A673 (cell line): ENCODE measurements at regions of chr19 and their contacts with region 1.

Region 1: DNA sequence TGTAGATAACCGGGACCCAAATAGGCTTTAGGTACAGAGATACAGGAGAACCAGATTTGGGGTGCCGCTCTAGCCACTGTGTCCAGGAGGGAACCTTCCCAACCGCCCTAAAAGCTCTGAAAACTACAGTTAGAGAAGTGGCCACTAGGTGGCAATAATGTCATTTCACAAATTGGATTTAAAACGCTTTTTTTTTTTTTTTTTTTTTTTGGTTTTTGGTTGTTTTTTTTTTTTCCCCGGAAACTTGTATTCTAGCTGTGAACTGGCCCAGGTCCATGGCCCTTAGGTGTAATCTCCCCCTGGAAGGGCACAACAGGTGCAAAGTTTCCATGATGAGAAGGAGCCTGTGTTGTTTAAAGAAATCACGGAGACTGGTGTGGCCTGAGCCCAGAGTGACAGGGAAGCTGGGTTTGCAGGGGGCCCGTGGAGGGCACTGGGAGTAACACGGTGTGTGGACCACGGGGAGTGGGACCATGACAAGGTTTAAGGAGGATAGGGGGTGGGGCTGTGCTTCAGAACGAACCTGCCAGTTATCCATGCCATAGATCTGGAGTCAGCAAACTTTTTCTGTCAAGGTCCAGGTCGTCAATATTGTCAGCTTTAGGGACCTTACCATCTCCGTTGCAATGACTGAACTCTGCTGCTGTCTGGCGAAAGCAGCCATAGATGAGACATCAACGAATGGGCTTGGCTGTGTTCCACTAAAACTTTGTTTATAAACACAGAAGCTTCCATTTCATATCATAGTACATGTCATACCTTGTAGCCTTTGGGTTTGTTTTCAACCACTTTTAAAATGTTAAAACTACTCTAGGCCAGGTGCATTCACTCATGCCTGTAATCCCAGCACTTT is 10.1 kb downstream of the OR1I1 start:
- DNase-seq: peak; percentile 81
- H3K4me3 ChIP-seq: no peak overlapping the region
- H3K27ac ChIP-seq: no peak overlapping the region
- H3K4me1 ChIP-seq: no peaks in the 10 kb centered on the region
- H3K27me3 ChIP-seq: peaks cover 10% of the 10 kb centered on the region
- CTCF ChIP-seq: peak; percentile 78

Region 2: GRCh38 chr19:14972676-14973075 is 119.5 kb before region 1 on chr19:
- CTCF ChIA-PET with region 1: no interaction called
- POLR2A ChIA-PET with region 1: no interaction called
- intact Hi-C with region 1: no loop called
- DNase-seq: no peak
- H3K4me3 ChIP-seq: no peak overlapping the region
- H3K27ac ChIP-seq: no peak overlapping the region
- H3K4me1 ChIP-seq: no peaks in the 10 kb centered on the region
- H3K27me3 ChIP-seq: peaks cover 21% of the 10 kb centered on the region
- CTCF ChIP-seq: no peak

Region 3: DNA sequence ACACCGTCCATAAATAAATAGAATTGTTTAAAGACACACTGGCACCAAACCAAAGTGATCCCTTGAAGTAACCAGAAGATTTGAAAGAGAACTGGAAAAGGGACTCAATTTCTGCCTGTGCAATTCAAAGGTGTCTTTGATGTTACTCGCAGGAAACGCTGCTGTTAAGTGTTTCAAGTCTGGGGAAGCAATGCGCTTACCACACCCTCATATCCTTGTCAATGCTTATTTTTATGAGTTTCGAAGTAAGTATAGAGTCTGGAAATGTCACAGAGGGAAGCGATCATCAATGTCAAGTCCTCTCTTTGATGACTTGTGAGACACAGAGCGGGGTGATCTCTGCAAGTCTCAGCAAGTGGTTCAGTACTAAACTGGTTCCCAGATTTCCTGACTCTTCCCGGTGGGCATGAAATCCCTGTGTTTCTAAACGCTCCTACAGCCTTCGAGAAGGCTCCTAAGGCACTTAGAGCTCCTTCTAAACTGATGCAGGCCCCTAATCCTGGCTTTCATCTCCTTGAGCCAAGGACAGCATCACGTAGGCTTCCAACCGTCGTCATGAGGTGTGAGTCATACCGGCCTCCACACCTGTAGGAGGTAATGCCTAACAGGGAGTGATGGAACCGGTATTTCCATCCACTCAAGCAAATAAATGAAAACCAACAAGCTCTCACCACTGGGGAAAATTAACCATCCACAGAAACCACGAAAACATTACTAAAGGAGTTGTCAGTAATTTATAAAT is 37.9 kb after region 1 on chr19:
- CTCF ChIA-PET with region 1: no interaction called
- POLR2A ChIA-PET with region 1: no interaction called
- intact Hi-C with region 1: no loop called
- DNase-seq: no peak
- H3K4me3 ChIP-seq: no peak overlapping the region
- H3K27ac ChIP-seq: no peak overlapping the region
- H3K4me1 ChIP-seq: peaks cover 5% of the 10 kb centered on the region
- H3K27me3 ChIP-seq: no peaks in the 10 kb centered on the region
- CTCF ChIP-seq: no peak

Region 4: DNA sequence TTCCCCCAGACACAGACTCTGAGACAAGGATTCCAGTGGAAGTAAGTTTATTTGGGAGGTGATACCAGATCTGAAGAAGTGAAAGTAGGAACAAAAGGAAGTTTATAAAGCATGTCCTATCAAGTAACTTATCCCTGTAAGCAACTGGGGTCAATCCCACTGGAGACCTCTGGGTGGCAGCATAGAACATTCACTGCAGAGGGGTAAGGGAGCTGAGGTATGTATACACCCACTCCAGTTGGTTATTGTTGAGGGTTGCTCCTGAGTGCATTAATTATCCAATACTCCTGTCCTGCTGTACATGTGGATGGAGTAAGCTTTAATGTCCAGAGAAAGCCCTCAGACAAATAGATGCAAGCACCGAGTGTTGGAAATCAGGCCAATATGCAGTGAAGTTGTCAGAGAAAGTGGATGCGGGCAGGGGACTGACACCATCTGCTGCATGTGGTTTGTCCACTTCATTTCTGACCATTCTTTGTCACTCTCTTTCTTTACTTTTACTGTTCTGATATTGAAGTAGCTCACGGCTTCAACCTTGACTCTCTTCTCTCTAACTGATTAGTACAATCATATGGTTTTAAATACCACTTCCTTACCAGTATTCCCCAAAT is 62.0 kb after region 1 on chr19:
- CTCF ChIA-PET with region 1: interaction called, 8 read pairs
- POLR2A ChIA-PET with region 1: no interaction called
- intact Hi-C with region 1: loop called (anchors 5 kb)
- DNase-seq: peak; percentile 73
- H3K4me3 ChIP-seq: no peak overlapping the region
- H3K27ac ChIP-seq: no peak overlapping the region
- H3K4me1 ChIP-seq: no peaks in the 10 kb centered on the region
- H3K27me3 ChIP-seq: no peaks in the 10 kb centered on the region
- CTCF ChIP-seq: peak; percentile 79

Region 5: DNA sequence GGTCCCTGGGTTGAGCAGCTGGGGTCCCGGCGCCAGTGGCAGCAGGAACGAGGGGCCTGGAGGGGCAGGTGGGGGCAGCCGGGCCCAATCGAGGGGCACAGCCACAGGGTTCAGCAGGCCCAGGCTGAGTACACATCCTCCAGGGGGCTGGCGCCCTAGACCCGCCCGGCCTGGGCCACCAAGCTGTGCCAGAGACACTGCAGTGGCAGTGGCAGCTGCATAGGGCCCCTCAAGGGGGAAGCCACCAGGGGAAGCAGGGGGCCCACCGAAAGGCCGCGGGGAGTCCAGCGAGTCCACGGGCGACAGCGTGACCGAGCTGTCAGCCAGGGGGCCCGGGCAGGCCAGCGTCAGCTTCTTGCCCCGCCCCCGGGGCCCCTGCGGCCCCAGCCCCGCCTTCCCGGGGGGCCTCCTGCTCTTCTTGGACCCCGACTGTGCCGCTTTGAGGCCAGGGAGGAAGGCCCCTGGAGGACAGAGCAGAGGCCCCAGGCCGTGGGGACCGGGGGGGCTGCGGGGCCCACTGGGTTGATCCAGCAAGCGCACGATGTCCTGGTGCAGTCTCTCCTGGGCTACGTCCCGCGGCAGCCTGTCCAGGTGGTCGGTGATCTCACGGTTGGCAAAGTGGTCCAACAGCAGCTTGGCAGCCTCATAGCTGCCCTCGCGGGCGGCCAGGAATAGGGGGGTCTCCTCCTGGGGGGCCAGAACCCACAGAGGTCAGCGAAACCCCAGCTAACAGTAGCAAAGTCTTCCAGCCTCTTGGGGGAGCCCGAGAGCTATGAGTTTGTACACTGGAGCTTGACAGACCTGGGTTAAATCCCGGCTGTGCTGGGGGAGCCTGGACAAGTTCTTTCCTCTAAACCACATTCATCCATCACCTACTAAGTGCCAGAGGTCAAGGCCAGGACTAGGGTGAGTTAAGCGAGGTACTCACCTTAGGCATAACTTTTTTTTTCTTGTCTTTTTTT is 69.2 kb after region 1 on chr19:
- CTCF ChIA-PET with region 1: interaction called, 18 read pairs
- POLR2A ChIA-PET with region 1: no interaction called
- intact Hi-C with region 1: no loop called
- DNase-seq: peak; percentile 56
- H3K4me3 ChIP-seq: no peak overlapping the region
- H3K27ac ChIP-seq: no peak overlapping the region
- H3K4me1 ChIP-seq: no peaks in the 10 kb centered on the region
- H3K27me3 ChIP-seq: no peaks in the 10 kb centered on the region
- CTCF ChIP-seq: peak; percentile 58

Region 6: DNA sequence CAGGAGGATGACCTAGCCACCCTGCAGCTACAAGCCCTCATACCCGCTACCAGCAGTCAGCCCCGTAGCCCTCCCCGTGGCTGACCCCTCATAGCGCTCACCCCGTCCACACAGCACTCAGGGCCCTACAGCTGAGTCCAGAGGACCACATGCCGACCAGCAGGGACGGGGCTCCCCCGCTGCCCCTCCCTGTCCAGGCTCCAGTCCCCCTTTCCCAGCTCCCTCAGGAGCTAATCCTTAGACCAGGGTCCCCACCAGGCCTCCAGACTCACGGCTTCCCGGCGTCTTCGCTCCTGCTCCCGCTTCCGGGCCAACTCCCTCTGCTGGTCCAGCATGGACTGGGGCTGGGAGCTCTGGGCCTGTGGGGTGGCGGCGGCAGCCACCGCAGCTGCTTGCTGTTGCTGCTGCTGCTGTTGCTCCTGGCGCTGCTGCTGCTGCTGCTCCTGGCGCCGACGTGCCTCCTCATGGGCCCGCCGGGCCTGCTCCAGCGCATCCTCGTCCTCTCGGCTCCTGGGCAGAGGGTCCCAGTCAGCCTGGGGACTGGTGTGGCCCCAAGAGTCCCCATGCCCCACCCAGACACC is 146.4 kb after region 1 on chr19:
- CTCF ChIA-PET with region 1: no interaction called
- POLR2A ChIA-PET with region 1: no interaction called
- intact Hi-C with region 1: no loop called
- DNase-seq: no peak
- H3K4me3 ChIP-seq: no peak overlapping the region
- H3K27ac ChIP-seq: no peak overlapping the region
- H3K4me1 ChIP-seq: no peaks in the 10 kb centered on the region
- H3K27me3 ChIP-seq: no peaks in the 10 kb centered on the region
- CTCF ChIP-seq: no peak

Region 7: DNA sequence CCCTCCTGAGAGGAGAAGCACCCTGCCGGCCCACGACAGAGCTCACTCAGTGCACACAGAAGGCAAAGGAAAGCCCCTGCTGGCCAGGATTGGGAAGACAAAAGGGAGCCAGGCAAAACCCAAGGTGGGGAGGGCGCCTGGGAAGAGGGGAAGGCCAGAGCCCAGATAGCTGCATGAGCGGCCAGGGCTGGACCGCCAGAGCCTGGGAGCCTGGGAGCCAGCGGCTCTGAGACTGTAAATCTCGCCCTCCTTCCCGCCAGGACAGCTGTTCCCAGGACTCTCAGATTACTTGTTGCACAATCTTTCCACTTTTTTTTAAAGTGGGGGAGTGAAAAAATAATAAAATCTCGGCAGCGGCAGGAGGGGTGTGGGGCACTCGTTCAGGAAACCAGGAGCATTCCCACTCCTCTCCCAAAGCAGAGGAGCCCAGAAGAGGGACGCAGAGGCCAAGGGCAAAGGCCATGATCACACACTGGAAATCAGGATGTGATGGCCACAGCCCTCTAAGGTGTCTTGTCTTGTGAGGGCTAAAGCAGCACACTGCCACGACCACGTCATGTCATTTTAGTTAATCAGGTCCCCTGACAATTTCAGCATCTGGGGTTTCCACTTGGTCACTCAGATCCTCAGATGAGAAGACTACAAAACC is 159.7 kb after region 1 on chr19:
- CTCF ChIA-PET with region 1: interaction called, 4 read pairs
- POLR2A ChIA-PET with region 1: no interaction called
- intact Hi-C with region 1: loop called (anchors 10 kb)
- DNase-seq: peak; percentile 79
- H3K4me3 ChIP-seq: no peak overlapping the region
- H3K27ac ChIP-seq: peak overlapping the region; percentile 65
- H3K4me1 ChIP-seq: peaks cover 21% of the 10 kb centered on the region
- H3K27me3 ChIP-seq: no peaks in the 10 kb centered on the region
- CTCF ChIP-seq: peak; percentile 51

Region 8: DNA sequence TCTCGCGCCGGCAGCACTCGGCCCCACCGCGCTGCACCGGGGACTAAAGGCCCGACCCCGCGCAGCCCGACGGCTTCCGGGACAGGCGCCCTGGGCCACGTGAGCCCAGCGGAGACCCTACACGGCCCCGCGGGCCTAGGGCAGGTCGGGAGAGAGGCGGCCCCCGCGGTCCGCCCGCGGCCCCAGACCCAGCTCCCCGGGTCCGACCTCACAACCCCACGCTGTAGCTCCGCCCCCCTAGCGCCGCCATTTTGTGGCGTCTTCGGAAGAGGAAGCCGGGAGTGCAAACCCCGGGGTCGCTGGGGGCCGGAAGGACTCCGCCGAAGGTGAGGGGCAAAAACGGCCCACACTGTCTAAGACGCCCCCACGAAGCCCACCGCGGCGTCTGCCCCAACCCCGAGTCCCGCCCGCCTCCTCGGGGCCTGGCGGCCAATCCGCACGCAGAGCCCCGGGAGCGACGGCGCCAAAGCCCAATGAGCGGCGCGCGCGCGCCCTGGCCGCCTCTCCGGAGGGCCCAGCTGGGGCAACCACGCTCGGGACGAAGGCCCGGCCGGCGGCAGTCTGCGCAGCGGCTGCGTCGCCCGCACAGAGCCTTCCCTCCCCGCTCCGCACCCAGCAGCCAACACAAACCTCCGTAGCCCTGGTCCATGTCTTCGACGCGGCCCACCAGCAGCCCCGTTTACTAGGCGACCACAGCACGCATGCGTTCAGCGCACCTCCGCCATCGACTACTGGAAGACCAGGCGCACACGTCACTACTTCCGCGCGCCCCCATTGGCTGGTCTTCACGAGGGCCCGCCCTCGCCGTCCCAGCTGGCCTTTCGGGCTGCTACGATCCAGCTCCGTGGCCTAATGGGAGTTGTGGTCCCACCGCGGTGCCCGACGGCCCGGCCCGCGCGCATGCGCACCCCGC is 287.2 kb after region 1 on chr19 and contains the start of gene AKAP8:
- CTCF ChIA-PET with region 1: interaction called, 23 read pairs
- POLR2A ChIA-PET with region 1: no interaction called
- intact Hi-C with region 1: no loop called
- DNase-seq: peak; percentile 99
- H3K4me3 ChIP-seq: peak within 1 kb of the TSS; percentile 80
- H3K27ac ChIP-seq: peak within 1 kb of the TSS; percentile 99
- H3K4me1 ChIP-seq: peaks cover 11% of the 10 kb centered on the region
- H3K27me3 ChIP-seq: no peaks in the 10 kb centered on the region
- CTCF ChIP-seq: no peak
- total RNA-seq, gene AKAP8: 46.8 and 48.4 TPM in 2 replicates

Region 9: GRCh38 chr19:15418588-15419412 is 326.7 kb after region 1 on chr19 and contains the start of gene AKAP8L:
- CTCF ChIA-PET with region 1: interaction called, 14 read pairs
- POLR2A ChIA-PET with region 1: no interaction called
- intact Hi-C with region 1: no loop called
- DNase-seq: peak; percentile 100
- H3K4me3 ChIP-seq: peak within 1 kb of the TSS; percentile 80
- H3K27ac ChIP-seq: peak within 1 kb of the TSS; percentile 94
- H3K4me1 ChIP-seq: peaks cover 27% of the 10 kb centered on the region
- H3K27me3 ChIP-seq: no peaks in the 10 kb centered on the region
- CTCF ChIP-seq: peak; percentile 86
- total RNA-seq, gene AKAP8L: 132 and 147 TPM in 2 replicates